Activated naive CD4-positive, alpha-beta T cell treated with anti-CD3 and anti-CD28 coated beads for 36 hours (primary cell): ENCODE measurements at regions of chr1 and their contacts with region 1.

Region 1: DNA sequence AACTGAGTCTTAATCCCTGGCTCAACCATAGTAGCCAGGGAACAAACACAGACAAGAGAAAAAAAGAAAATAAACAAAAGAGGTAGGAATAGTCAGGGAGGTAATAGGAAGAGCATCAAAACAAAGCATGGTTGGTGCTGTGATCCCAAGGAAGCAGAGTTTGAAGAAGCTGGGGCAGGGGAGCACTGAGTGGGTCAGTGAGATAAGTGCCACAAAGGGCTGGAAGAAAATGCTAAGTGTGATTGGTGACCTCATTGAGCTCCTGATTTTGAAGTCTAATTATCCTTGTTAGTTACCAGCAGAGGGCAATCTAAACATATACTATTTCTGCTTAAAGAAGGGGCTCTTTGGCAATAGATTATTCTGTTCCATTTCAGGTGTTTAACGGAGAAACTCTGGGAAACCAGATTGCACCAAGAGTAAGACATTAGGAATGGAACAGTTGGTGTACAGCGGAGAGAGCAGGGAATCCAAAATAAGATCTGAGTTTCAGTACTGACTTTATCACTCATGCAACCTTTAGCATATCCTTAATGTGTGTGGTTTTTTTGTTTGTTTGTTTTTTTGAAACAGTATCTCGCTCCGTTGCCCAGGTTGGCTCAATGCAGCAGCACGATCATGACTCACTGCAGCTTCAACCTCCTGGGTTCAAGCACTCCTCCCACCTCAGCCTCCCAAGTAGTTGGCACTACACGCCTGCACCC is 30.7 kb upstream of the KIAA1614 start:
- DNase-seq: no peak
- H3K4me3 Mint-ChIP-seq: no peak overlapping the region
- H3K27ac Mint-ChIP-seq: no peak overlapping the region
- H3K4me1 Mint-ChIP-seq: peaks cover 2% of the 10 kb centered on the region
- H3K27me3 Mint-ChIP-seq: no peaks in the 10 kb centered on the region

Region 2: GRCh38 chr1:180515864-180516388 is 366.0 kb before region 1 on chr1:
- CTCF ChIA-PET with region 1: interaction called, 3 read pairs
- intact Hi-C with region 1: loop called (anchors 5 kb)
- DNase-seq: peak; percentile 76
- H3K4me3 Mint-ChIP-seq: no peak overlapping the region
- H3K27ac Mint-ChIP-seq: no peak overlapping the region
- H3K4me1 Mint-ChIP-seq: peaks cover 3% of the 10 kb centered on the region
- H3K27me3 Mint-ChIP-seq: peaks cover 3% of the 10 kb centered on the region

Region 3: GRCh38 chr1:180920702-180921101 is 38.7 kb after region 1 on chr1:
- CTCF ChIA-PET with region 1: interaction called, 3 read pairs
- intact Hi-C with region 1: loop called (anchors 1 kb)
- DNase-seq: no peak
- H3K4me3 Mint-ChIP-seq: no peak overlapping the region
- H3K27ac Mint-ChIP-seq: no peak overlapping the region
- H3K4me1 Mint-ChIP-seq: no peaks in the 10 kb centered on the region
- H3K27me3 Mint-ChIP-seq: no peaks in the 10 kb centered on the region

Region 4: DNA sequence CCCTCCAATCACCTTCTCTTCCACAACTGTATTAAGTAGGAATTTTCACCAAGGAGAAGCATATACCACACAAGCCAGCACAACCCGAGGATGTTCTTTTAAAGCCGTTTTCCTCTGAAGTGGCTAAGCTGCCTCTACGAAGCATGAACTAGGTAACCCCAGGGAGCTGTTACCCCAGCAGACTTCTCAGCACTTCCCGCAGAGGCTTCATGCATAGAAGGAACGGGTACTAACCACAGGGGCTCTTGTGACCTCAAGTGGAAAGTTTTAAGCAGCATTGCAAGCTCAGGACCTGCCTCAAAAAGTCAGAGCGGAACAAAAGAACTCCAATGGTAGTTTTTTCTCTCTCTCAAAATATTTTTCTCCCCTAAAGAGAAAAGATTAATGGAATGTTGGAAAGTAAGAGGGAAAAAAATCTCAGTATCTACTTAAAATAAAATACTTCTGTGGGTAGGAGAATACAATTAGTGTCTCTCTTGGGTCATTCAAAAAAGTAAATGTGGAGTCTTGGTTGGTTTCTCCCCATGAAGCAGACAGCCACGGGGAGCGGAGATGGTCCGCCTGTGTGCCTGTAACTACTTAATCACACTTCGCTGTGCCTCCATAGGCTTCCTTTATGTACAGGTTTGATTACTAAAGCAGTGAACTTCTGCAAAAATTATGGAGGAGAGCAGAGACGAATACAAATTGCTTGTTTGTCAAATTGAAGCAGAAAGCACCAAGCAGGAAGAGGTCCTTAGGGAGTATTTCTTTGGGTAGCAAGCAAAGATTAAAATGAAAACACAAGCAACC is 99.8 kb after region 1 on chr1:
- CTCF ChIA-PET with region 1: no interaction called
- intact Hi-C with region 1: loop called (anchors 1 kb)
- DNase-seq: peak; percentile 68
- H3K4me3 Mint-ChIP-seq: no peak overlapping the region
- H3K27ac Mint-ChIP-seq: peak overlapping the region; percentile 46
- H3K4me1 Mint-ChIP-seq: peaks cover 30% of the 10 kb centered on the region
- H3K27me3 Mint-ChIP-seq: no peaks in the 10 kb centered on the region